Activated CD8-positive, alpha-beta memory T cell treated with anti-CD3 and anti-CD28 coated beads, Interleukin-2, amount 10 ng/mL, durations not matched to agents 7 days and 5 days (primary cell): ENCODE measurements at regions of chr9 and their contacts with region 1.

Region 1: GRCh38 chr9:33721674-33722358 is 73.5 kb upstream of the PRSS3 start:
- DNase-seq: peak; percentile 86
- ATAC-seq: peak; percentile 77
- H3K4me3 Mint-ChIP-seq: no peak overlapping the region
- H3K27ac Mint-ChIP-seq: no peak overlapping the region
- H3K4me1 Mint-ChIP-seq: peaks cover 1% of the 10 kb centered on the region
- H3K27me3 Mint-ChIP-seq: peaks cover 33% of the 10 kb centered on the region

Region 2: DNA sequence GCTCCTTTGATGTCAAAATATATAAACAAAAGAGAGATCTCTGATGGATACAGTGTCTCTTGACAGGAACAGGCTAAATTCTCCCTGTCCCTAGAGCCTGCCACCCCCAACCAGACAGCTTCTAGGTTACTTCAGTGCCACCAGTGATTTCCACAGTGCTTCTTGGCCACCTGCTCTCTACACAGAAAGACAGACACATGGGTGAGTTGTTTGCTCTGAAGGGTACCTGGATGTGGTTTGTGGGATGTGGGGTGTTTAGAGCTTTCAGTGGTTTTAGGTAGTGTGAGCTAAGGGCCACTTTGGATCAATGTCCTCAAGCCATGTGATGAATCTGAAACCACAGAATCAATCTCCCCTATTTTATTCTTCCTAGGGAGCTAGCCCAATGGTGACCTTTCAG is 72.4 kb before region 1 on chr9:
- CTCF ChIA-PET with region 1: interaction called, 13 read pairs
- DNase-seq: peak; percentile 73
- ATAC-seq: peak; percentile 58
- H3K4me3 Mint-ChIP-seq: no peak overlapping the region
- H3K27ac Mint-ChIP-seq: no peak overlapping the region
- H3K4me1 Mint-ChIP-seq: peaks cover 15% of the 10 kb centered on the region
- H3K27me3 Mint-ChIP-seq: peaks cover 74% of the 10 kb centered on the region

Region 3: DNA sequence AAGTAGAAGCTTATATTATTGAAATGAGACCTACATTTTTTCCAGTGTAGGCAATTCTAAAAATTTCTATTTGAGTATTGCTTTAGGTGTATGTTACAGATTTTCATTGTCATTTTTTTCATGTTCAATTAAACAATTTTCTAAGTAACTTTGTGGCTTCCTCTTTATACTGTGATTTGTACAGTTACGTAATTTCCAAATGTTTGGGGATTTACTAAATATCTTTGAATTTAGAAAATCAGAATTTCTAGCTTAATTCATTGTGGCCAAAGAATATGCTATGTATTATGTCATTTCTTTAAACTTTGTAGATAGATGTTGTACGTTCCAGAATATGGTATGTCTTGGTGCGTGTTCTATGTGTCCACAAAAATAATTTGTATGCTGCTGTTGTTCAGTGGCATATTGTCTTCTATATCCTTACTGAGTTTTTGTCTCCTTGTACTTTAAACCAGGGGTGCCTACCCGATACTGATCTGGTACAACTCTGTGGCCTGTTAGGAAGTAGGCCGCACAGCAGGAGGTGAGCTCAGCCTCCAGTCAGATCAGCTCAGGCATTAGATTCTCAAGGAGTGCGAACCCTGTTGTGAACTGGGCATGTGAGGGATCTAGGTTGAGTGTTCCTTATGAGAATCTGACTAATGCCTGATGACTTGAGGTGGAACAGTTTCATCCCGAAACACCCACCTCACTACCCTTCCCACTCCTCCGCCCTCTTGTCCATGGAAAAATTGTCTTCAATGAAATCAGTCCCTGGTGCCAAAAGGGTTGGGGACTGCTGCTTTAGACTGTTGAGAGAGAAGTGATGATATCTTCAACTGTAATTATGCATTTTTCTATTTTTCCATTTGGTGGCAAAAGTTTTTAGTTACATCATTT is 158.6 kb after region 1 on chr9:
- CTCF ChIA-PET with region 1: no interaction called
- DNase-seq: no peak
- ATAC-seq: no peak
- H3K4me3 Mint-ChIP-seq: no peak overlapping the region
- H3K27ac Mint-ChIP-seq: no peak overlapping the region
- H3K4me1 Mint-ChIP-seq: peaks cover 13% of the 10 kb centered on the region
- H3K27me3 Mint-ChIP-seq: no peaks in the 10 kb centered on the region